Left ventricle myocardium superior (tissue), 1 donor: ENCODE measurements at regions of chr1 and their contacts with region 1.

Region 1: DNA sequence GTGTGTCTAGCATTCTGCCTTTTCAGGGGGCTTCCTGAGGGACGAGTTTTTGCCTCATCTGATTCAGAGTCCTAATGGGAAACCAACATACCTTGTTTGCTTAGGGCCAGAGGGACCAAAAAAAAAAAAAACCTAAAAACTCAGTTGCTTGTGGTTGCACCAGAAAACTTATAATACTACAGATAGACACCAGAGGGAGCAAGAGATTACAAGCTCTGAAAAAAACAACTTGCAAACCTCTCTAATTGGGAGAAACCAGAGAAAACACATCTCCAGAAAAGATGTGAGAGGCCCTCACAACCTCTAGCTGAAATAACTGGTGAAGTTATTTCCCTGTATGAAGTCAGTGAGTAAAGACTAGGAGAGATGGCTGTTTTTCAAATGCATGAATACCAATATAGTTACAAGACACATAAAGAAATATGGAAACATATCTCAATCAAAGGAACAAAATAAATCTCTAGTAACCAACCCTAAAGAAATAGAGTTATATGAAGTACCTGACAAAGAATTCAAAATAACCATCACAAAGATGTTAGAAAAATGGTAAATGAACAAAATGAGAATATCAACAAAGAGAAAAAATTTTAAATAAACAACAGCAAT is 233.7 kb upstream of the NFIA start:
- DNase-seq: no peak
- ATAC-seq: no peak

Region 2: GRCh38 chr1:61043010-61043820 is 194.5 kb after region 1 on chr1:
- intact Hi-C with region 1: loop called (anchors 2 kb)
- DNase-seq: peak; percentile 95
- ATAC-seq: peak; percentile 98

Region 3: DNA sequence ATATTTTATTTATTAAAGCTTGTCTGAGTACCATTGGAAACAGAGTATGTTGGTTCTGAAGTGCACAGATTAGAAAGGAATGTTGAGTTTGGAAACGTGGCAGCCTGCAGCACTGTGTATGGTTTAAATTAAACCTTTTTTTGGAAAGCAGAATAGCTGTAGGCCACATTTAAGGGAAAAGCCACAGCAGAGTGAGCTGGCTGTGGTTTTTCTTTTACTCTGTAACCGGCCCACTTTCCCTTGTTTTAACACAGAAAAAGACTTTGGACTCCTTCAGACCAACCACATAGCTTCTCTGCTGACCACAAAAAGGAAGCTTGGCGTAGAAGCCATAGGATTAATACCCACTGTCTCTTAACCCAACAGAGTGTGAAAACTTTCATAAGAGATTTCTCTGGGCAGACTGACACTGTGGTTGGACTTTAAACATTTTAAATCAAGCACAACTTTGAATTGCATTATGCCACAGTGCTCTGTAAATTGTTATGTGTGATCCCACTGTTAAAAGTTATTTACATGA is 308.8 kb after region 1 on chr1:
- intact Hi-C with region 1: no loop called
- DNase-seq: no peak
- ATAC-seq: peak; percentile 69